Activated CD4-positive, alpha-beta T cell treated with anti-CD3 and anti-CD28 coated beads, Interleukin-2, amount 10 ng/mL, durations not matched to agents 24 days and 14 days (primary cell): ENCODE measurements at regions of chr13 and their contacts with region 1.

Region 1: DNA sequence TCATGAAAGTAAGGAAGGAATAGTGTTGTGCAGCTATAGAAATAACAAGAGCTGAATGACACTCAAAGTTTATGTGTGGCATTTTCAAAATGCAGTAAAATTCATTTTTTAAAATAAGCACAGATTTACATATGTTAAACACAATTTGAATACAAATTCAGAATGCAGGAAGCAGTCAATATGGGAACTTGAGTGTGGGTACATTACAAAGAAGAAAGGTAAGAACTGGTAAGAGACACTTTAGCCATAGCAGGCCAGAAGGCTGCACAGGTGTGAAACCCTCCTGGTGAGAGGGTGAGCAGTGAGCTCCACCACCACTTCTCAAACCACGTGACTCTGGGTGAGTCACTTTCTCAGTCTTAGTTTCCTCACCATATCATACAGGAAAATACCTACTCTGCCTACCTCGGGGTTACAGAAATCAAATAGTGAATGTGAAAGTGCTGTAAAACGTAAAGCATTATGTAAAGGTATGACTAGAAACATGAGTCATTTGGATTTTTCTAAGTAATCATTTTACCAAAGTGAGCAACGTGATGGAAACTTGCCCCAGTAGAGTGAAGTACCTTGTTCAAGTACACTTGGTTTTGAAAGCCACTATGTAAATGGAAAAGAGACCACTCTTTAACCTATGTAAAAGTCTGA is 40.5 kb downstream of the USP12 start:
- DNase-seq: peak; percentile 94
- H3K4me3 Mint-ChIP-seq: peak overlapping the region; percentile 62
- H3K27ac Mint-ChIP-seq: peak overlapping the region; percentile 80
- H3K4me1 Mint-ChIP-seq: peaks cover 64% of the 10 kb centered on the region
- H3K27me3 Mint-ChIP-seq: no peaks in the 10 kb centered on the region

Region 2: GRCh38 chr13:26923824-26924605 is 207.1 kb before region 1 on chr13:
- intact Hi-C with region 1: no loop called
- DNase-seq: no peak
- H3K4me3 Mint-ChIP-seq: no peak overlapping the region
- H3K27ac Mint-ChIP-seq: no peak overlapping the region
- H3K4me1 Mint-ChIP-seq: no peaks in the 10 kb centered on the region
- H3K27me3 Mint-ChIP-seq: peaks cover 16% of the 10 kb centered on the region

Region 3: DNA sequence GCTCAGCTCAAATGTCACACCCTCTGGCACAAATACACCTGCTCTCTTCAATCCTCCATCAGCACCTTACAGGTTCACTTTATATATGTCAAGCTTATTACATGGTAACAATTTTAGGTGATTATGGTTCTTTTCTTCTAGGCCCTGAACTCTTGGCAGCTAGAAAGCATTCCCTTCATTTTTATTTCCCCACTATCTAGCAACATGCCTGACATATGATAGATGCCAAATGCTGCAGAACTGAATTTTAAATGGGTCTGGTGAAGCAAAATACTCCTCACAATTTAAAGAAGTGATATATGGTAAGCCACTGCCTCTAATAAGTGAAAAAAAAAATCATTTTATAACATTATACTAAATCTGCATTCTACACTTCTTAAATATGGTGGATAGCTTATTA is 54.7 kb before region 1 on chr13:
- intact Hi-C with region 1: no loop called
- DNase-seq: no peak
- H3K4me3 Mint-ChIP-seq: no peak overlapping the region
- H3K27ac Mint-ChIP-seq: peak overlapping the region; percentile 43
- H3K4me1 Mint-ChIP-seq: peaks cover 15% of the 10 kb centered on the region
- H3K27me3 Mint-ChIP-seq: no peaks in the 10 kb centered on the region

Region 4: GRCh38 chr13:27086599-27087265 is 44.4 kb before region 1 on chr13:
- intact Hi-C with region 1: loop called (anchors 2 kb)
- DNase-seq: no peak
- H3K4me3 Mint-ChIP-seq: no peak overlapping the region
- H3K27ac Mint-ChIP-seq: peak overlapping the region; percentile 31
- H3K4me1 Mint-ChIP-seq: peaks cover 6% of the 10 kb centered on the region
- H3K27me3 Mint-ChIP-seq: no peaks in the 10 kb centered on the region

Region 5: GRCh38 chr13:27171827-27172494 is 40.9 kb after region 1 on chr13:
- intact Hi-C with region 1: loop called (anchors 1 kb)
- DNase-seq: peak; percentile 97
- H3K4me3 Mint-ChIP-seq: peak overlapping the region; percentile 82
- H3K27ac Mint-ChIP-seq: peak overlapping the region; percentile 83
- H3K4me1 Mint-ChIP-seq: peaks cover 45% of the 10 kb centered on the region
- H3K27me3 Mint-ChIP-seq: no peaks in the 10 kb centered on the region

Region 6: DNA sequence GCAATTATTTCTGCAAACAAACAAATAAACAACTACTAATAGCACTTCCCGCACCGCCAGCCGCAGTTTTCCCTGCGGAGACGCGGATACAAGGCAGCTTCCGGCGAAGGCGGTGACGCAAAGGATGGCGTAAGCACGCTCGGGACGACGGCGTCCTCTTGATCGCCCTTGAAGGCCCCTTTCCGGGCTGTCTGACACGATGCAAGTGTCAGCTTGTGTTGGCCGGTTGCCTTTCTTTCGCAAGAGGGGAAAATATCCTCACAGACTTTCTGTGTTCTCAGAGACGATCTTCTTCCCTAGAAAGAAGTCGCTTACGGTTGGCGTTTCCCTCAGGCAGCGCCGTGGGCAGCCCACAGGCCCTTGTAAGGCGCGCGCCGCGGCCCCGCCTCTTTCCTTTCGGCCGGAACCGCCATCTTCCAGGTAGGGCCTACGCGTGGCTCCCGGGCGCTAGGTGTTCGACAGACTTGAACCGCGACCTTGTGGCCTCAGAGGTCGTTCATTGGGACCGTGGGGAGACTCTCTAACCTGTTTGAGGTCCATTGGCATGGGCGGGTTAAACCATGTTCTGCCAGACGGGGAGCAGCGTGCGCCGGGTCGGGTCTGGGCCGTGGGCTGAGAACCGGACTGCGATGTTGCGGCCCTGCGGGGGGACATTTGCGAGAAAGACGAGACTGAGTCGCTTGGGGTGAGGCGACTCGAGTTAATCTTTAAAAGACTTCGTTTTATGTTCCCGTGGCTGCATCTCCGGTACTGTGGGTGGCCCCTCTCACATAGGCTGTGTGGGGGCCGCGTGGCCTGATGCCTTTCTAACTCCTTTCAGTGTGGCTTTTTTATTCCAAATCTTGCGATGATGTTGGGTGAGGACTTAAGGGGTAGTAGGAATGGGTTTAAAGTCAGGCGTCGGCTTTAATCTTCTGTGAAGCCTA is 120.3 kb after region 1 on chr13 and contains the start of gene RPL21:
- intact Hi-C with region 1: loop called (anchors 1 kb)
- DNase-seq: peak; percentile 97
- H3K4me3 Mint-ChIP-seq: peak within 1 kb of the TSS; percentile 100
- H3K27ac Mint-ChIP-seq: peak within 1 kb of the TSS; percentile 99
- H3K4me1 Mint-ChIP-seq: peaks cover 30% of the 10 kb centered on the region
- H3K27me3 Mint-ChIP-seq: no peaks in the 10 kb centered on the region
- total RNA-seq, gene RPL21: 1,100 and 1,185 TPM in 2 replicates

Region 7: GRCh38 chr13:27424246-27425157 is 293.4 kb after region 1 on chr13 and contains the start of gene GTF3A:
- intact Hi-C with region 1: loop called (anchors 1 kb)
- DNase-seq: peak; percentile 97
- H3K4me3 Mint-ChIP-seq: peak within 1 kb of the TSS; percentile 86
- H3K27ac Mint-ChIP-seq: peak within 1 kb of the TSS; percentile 95
- H3K4me1 Mint-ChIP-seq: peaks cover 35% of the 10 kb centered on the region
- H3K27me3 Mint-ChIP-seq: no peaks in the 10 kb centered on the region
- total RNA-seq, gene GTF3A: 279 and 284 TPM in 2 replicates

Region 8: DNA sequence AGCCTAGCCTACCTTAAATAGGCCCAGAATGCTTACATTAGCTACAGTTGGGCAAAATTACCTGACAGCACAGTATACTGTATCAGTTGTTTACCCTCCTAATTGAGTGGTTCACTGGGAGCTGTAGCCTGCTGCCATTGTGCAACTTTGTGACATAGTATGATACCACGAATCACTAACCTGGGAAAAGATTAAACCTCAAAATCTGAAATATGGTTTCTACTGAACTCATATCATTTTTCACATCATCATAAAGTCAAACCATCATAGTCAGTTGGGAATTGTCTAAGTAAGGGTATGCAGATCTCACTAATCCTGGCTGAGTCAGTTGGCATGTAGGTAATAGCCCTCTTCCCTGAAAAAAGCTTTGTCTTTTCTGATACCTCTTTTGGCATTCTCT is 1016.4 kb after region 1 on chr13:
- intact Hi-C with region 1: loop called (anchors 10 kb)
- DNase-seq: no peak
- H3K4me3 Mint-ChIP-seq: no peak overlapping the region
- H3K27ac Mint-ChIP-seq: no peak overlapping the region
- H3K4me1 Mint-ChIP-seq: peaks cover 18% of the 10 kb centered on the region
- H3K27me3 Mint-ChIP-seq: no peaks in the 10 kb centered on the region